ENCODE measurements at regions of chr19 and their contacts with region 1.

Region 1: GRCh38 chr19:18588611-18589379 is at the start of gene REX1BD:
- DNase-seq: peak; percentile 93
- ATAC-seq: peak; percentile 78
- H3K4me3 ChIP-seq: peak within 1 kb of the TSS; percentile 46 to 92 (median 77)
- H3K4me3 Mint-ChIP-seq: peak within 1 kb of the TSS; percentile 76
- H3K27ac ChIP-seq: peak within 1 kb of the TSS; percentile 73 to 82
- H3K27ac Mint-ChIP-seq: peak within 1 kb of the TSS; percentile 89
- H3K4me1 ChIP-seq: peaks cover 18 to 43% of the 10 kb centered on the region in 2 donors
- H3K4me1 Mint-ChIP-seq: peaks cover 30% of the 10 kb centered on the region
- H3K27me3 ChIP-seq: no peaks in the 10 kb centered on the region
- H3K27me3 Mint-ChIP-seq: no peaks in the 10 kb centered on the region
- CTCF ChIP-seq: peak; percentile 80
- total RNA-seq, gene REX1BD: 78.1 and 90.9 TPM in 2 replicates

Region 2: GRCh38 chr19:18542936-18543815 is 45.6 kb before region 1 on chr19 and contains the start of gene FKBP8:
- CTCF ChIA-PET with region 1: interaction called, 4 read pairs
- POLR2A ChIA-PET with region 1: interaction called, 4 read pairs
- intact Hi-C with region 1: loop called (anchors 5 kb)
- DNase-seq: peak; percentile 92
- ATAC-seq: peak; percentile 98
- H3K4me3 ChIP-seq: peak within 1 kb of the TSS; percentile 51 to 76 (median 68)
- H3K4me3 Mint-ChIP-seq: peak within 1 kb of the TSS; percentile 96
- H3K27ac ChIP-seq: peak within 1 kb of the TSS; percentile 54 to 64
- H3K27ac Mint-ChIP-seq: peak within 1 kb of the TSS; percentile 96
- H3K4me1 ChIP-seq: peaks cover 14 to 20% of the 10 kb centered on the region in 2 donors
- H3K4me1 Mint-ChIP-seq: peaks cover 20% of the 10 kb centered on the region
- H3K27me3 ChIP-seq: no peaks in the 10 kb centered on the region
- H3K27me3 Mint-ChIP-seq: no peaks in the 10 kb centered on the region
- CTCF ChIP-seq: no peak
- total RNA-seq, gene FKBP8: 148 and 150 TPM in 2 replicates

Region 3: GRCh38 chr19:18571564-18572300 is 17.1 kb before region 1 on chr19 and contains the start of gene UBA52:
- CTCF ChIA-PET with region 1: interaction called, 25 read pairs
- POLR2A ChIA-PET with region 1: interaction called, 17 read pairs
- intact Hi-C with region 1: loop called (anchors 1 kb)
- DNase-seq: peak; percentile 99
- ATAC-seq: peak; percentile 93
- H3K4me3 ChIP-seq: peak within 1 kb of the TSS; percentile 69 to 94 (median 86)
- H3K4me3 Mint-ChIP-seq: peak within 1 kb of the TSS; percentile 94
- H3K27ac ChIP-seq: peak within 1 kb of the TSS; percentile 85 to 95
- H3K27ac Mint-ChIP-seq: peak within 1 kb of the TSS; percentile 90
- H3K4me1 ChIP-seq: peaks cover 12 to 25% of the 10 kb centered on the region in 2 donors
- H3K4me1 Mint-ChIP-seq: peaks cover 16% of the 10 kb centered on the region
- H3K27me3 ChIP-seq: no peaks in the 10 kb centered on the region
- H3K27me3 Mint-ChIP-seq: no peaks in the 10 kb centered on the region
- CTCF ChIP-seq: no peak
- total RNA-seq, gene UBA52: 1,690 and 1,837 TPM in 2 replicates

Region 4: DNA sequence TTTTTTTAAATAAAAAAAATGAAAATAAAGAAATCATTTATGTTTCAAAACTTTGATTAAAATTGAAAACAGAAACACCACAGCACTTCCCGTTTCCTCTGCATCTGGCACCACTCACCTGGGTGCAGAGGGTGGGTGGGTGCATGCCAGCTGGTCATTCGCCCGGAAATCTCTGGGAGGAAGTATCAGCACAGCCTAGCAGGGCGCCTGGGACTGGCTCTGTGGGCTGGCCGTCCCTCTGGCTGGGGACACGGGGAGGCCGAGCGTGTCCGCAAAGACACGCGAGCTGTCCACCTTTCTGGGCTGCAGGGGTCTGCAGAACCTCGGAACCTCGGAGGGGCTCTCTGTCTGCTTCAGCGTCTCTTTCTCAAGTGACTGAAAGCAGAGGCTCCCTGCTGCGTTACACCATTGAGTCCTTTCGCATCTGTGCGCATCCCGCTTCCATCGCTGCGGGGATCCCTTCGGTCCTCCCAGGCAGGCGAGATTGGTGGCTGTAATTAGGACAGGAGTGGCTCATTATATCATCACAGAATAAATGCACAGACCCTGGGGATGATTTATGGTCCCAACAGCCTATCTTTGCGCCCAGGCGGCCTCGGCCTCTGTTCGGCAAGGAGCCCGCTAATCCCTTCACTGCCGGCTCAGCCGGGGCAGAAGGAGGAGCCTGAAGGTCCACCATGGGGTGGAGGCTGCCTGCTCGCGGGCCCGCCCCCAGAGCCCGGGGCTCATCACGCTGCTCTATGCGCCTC is 111.9 kb after region 1 on chr19:
- CTCF ChIA-PET with region 1: no interaction called
- POLR2A ChIA-PET with region 1: interaction called, 10 read pairs
- intact Hi-C with region 1: no loop called
- DNase-seq: peak; percentile 84
- ATAC-seq: peak; percentile 87
- H3K4me3 ChIP-seq: peak overlapping the region; percentile 44 to 76 (median 67)
- H3K4me3 Mint-ChIP-seq: peak overlapping the region; percentile 95
- H3K27ac ChIP-seq: peak overlapping the region; percentile 81 to 84
- H3K27ac Mint-ChIP-seq: peak overlapping the region; percentile 98
- H3K4me1 ChIP-seq: peaks cover 33 to 62% of the 10 kb centered on the region in 2 donors
- H3K4me1 Mint-ChIP-seq: peaks cover 44% of the 10 kb centered on the region
- H3K27me3 ChIP-seq: no peaks in the 10 kb centered on the region
- H3K27me3 Mint-ChIP-seq: no peaks in the 10 kb centered on the region
- CTCF ChIP-seq: no peak

Region 5: GRCh38 chr19:18846862-18847548 is 258.2 kb after region 1 on chr19:
- CTCF ChIA-PET with region 1: interaction called, 47 read pairs
- POLR2A ChIA-PET with region 1: interaction called, 4 read pairs
- intact Hi-C with region 1: no loop called
- DNase-seq: peak; percentile 78
- ATAC-seq: peak; percentile 76
- H3K4me3 ChIP-seq: no peak overlapping the region
- H3K4me3 Mint-ChIP-seq: peak overlapping the region; percentile 21
- H3K27ac ChIP-seq: no peak overlapping the region
- H3K27ac Mint-ChIP-seq: peak overlapping the region; percentile 64
- H3K4me1 ChIP-seq: peaks cover 32 to 52% of the 10 kb centered on the region in 2 donors
- H3K4me1 Mint-ChIP-seq: peaks cover 69% of the 10 kb centered on the region
- H3K27me3 ChIP-seq: no peaks in the 10 kb centered on the region
- H3K27me3 Mint-ChIP-seq: no peaks in the 10 kb centered on the region
- CTCF ChIP-seq: peak; percentile 84

Measured in B cell (primary cell).